ENCODE measurements at regions of chr19 and their contacts with region 1.

Region 1: DNA sequence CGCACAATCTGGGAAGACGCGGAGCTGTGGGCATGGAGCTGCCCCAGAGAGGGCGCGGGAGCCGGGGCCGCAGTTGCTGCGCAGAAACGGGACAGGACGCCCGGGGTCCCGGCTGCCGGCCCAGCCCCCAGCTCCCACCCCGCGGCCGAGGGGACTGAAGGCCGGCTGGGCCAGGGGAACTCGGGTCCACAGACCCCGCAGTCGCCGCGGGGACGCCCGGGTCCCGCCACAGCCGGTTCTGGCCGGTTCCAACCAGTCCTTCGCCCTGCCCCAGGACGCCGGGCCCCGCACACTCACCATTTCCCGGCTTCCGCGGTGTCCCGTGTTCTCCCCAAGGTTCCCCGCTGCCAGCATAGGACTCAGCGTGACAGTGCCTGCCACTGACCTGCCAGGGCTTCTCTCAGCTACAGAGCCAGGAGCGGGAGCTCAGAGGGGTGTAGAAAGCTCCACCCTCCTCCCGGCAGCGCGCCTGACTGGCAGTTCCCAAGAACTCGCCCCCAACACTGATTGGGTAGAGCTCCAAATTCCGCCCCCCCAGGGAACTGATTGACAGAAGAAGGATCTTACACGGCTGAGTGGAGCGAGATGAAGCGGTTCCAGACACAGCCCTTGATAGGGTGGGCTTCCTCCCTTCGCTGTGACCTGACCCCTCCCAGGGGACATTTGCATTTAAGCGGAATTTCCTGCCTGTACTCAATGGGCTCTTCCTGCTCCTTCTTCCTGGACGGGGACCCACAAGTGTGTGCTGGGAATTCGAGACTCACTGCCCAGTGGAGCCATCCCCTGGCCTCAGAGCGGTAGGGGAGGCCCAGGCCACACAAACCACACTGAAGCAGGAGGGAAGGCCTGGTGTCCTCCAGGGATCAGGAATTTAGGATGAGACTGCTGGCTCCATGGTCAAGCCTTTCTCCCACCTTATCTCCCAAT is at the start of gene ZNF442:
- DNase-seq: peak; percentile 93
- ATAC-seq: peak; percentile 98
- H3K4me3 ChIP-seq: peak within 1 kb of the TSS; percentile 70
- H3K27ac ChIP-seq: peak within 1 kb of the TSS; percentile 32
- H3K4me1 ChIP-seq: no peaks in the 10 kb centered on the region
- H3K27me3 ChIP-seq: no peaks in the 10 kb centered on the region
- CTCF ChIP-seq: peak; percentile 66
- POLR2A ChIP-seq: peak; percentile 79
- RAD21 ChIP-seq: peak; percentile 50
- total RNA-seq, gene ZNF442: 3.6 and 4.4 TPM in 2 replicates

Region 2: DNA sequence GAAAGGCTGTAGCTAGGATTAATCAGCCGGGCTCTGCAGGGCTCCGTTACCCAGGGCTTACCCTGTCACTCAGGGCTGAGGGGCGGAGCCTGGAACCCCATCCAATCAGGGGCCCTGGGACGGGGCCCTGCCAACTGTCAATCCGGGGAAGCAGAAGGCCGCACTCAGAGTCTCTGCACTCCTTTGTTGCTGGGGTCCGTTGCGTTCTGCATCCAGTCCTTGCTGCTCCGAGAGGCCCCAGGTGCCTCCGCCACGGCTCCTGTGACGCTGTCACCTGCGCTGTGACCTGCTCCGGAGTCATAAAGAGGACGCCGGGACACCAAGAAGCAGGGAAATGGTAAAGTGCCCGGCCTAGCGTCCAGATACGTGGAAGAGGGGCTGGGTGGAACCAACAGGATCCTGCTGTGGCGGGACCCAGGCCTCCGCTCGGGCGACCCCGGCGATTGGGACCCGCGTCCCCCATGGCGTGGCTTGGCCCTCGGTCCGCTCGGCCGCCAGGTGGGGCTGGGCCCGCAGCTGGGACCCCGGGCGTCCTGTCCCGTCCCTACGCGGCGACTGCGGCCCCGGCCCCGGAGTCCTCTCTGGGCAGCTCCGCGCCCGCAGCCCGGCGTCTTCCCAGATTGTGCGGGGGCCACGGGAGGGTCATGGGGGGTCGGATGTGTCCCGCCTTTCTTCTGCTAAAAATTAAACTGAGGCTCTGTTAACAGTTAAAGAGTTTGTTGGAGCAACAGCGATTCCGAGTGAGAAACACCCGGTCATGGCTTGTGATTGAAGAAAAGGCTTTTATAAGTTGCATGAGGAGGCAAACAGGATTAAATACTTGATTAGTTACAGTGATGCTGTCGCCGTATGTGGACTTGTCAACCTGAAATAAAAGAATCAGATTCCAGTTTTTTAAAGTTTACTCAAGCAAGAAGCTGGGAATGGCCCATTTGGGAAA is 566.8 kb before region 1 on chr19 and contains the start of gene ZNF491:
- CTCF ChIA-PET with region 1: no interaction called
- POLR2A ChIA-PET with region 1: no interaction called
- dilution Hi-C with region 1: no loop called
- in situ Hi-C with region 1: no loop called
- intact Hi-C with region 1: loop called (anchors 5 kb)
- DNase-seq: peak; percentile 87
- ATAC-seq: peak; percentile 99
- H3K4me3 ChIP-seq: peak within 1 kb of the TSS; percentile 76
- H3K27ac ChIP-seq: peak within 1 kb of the TSS; percentile 58
- H3K4me1 ChIP-seq: 0 out of 2 replicates have a peak, but pooled peaks cover 4% of the 10 kb centered on the region
- H3K27me3 ChIP-seq: no peaks in the 10 kb centered on the region
- CTCF ChIP-seq: peak; percentile 31
- POLR2A ChIP-seq: peak; percentile 52; the same call in 1 of the 2 replicates
- RAD21 ChIP-seq: no peak
- total RNA-seq, gene ZNF491: 3.6 and 4.2 TPM in 2 replicates

Region 3: DNA sequence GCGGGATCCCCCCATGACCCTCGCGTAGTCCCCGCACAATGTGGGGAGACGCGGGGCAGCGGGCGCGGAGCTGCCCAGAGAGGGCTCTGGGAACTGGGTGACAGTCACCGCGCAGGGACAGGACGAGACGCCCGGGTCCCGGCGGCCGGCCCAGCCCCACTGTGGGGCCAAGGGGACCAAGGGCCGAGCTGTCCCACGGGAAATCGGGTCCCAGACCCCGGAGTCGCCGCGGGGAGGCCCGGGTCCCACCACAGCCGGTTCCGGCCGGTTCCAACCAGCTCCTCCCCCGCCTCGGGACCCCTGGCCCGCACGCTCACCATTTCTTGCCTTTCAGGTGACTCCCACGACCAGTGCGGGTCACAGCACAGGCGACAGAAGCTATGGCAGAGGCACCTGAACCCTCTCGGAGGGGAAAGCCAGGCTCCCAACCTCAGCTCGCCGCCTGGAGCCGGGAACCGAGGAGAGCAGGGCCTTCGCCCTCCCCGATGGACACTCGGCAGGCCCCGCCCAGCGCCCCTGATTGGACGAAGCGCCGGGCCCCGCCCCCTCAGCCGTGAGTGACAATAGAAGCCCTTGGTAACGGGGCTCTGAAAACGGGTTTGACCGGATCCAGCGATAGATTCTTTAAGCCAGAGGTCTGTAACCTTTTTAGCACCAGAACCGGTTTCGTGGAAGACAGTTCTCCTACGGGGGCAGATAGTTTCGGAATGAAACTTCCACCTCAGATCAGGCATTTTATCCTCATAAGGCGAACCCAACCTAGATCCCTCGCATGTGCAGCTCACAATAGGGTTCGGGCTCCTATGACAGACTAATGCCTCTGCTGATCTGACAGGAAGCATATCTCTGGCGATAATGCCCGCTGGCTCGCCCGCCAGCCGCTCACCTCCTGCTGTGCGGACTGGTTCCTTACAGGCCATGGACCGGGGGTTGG is 330.0 kb before region 1 on chr19 and contains the start of gene ZNF433:
- CTCF ChIA-PET with region 1: no interaction called
- POLR2A ChIA-PET with region 1: interaction called, 20 read pairs
- dilution Hi-C with region 1: no loop called
- in situ Hi-C with region 1: no loop called
- intact Hi-C with region 1: no loop called
- DNase-seq: peak; percentile 71
- ATAC-seq: peak; percentile 100
- H3K4me3 ChIP-seq: peak within 1 kb of the TSS; percentile 90
- H3K27ac ChIP-seq: peak within 1 kb of the TSS; percentile 97
- H3K4me1 ChIP-seq: no peaks in the 10 kb centered on the region
- H3K27me3 ChIP-seq: no peaks in the 10 kb centered on the region
- CTCF ChIP-seq: no peak
- POLR2A ChIP-seq: peak; percentile 78
- RAD21 ChIP-seq: no peak
- total RNA-seq, gene ZNF433: 6.4 and 11.1 TPM in 2 replicates

Region 4: DNA sequence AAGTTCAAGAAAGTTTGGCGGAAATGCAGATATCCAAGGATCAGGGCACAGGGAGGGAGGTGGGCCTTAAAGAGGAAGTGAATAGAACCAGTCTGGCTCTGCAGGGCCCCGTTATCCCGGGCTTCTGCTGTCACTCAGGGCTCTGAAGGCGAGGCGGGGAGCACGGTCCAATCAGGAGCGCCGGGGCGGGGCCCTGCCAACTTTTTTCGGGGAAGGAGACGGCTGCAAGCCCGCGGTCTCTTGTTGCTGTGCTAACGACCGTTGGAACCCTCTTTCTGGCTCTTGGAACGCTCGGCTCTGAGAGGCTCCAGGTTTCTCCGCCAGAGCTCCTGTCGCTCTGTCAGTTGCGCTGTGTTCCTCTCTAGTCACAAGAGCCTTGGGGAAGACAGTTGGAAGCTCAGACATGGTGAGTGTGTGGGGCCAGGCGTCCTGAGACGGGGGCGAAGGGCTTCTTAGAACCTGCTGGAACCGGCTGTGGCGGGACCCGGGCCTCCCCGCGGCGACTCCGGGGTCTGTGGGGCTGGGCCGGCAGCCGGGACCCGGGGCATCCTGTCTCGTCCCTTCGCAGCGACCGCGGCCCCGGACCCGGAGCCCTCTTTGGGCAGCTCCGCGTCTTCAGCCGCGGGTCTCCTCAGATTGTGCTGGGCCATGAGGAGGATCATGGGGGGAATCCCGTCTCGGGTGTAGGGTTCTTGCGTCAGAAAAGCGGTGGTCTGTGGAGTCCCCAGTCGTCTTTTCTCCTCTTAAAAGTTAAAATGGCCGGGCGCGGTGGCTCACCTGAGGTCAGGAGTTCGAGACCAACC is 273.2 kb before region 1 on chr19:
- CTCF ChIA-PET with region 1: interaction called, 3 read pairs
- POLR2A ChIA-PET with region 1: no interaction called
- dilution Hi-C with region 1: no loop called
- in situ Hi-C with region 1: no loop called
- intact Hi-C with region 1: loop called (anchors 5 kb)
- DNase-seq: peak; percentile 86
- ATAC-seq: peak; percentile 99
- H3K4me3 ChIP-seq: peak overlapping the region; percentile 91
- H3K27ac ChIP-seq: peak overlapping the region; percentile 82
- H3K4me1 ChIP-seq: 0 out of 2 replicates have a peak, but pooled peaks cover 2% of the 10 kb centered on the region
- H3K27me3 ChIP-seq: no peaks in the 10 kb centered on the region
- CTCF ChIP-seq: no peak
- POLR2A ChIP-seq: no peak
- RAD21 ChIP-seq: no peak

Region 5: DNA sequence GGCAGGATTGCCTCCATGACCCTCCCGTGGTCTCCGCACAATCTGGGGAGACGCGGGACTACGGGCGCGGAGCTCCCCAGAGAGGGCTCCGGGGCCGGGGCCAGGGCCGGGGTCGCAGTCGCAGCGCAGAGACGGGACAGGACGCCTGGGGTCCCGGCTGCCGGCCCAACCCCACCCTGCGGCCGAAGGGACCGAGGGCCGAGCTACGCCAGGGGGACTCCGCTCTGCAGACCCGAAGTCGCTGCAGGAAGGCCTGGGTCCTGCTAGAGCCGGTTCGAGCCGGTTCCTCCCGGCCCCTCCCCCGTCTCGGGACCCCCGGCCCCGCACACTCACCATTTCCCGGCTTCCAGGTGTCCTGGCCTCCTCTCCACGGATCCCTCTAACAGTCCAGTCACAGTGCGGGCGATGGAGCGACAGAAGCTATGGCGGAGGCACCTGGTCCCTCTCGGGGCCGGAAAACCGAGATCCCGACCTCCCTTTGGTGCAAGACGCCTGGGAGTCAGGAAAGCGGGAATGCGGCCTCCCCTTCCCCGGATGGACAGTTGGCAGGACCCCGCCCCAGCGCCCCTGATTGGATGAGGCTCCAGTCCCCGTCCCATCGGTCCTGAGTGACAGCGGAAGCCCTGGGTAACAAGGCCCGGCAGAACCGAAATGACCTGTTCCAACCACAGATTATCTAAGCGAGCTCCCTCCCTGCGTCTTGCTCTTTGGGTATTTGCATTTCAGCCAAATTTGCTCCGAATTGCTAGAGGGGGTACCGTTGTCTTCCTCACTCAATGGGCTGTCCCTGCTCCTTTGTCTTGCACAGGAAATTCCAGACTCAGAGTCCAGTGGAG is 209.1 kb before region 1 on chr19 and contains the start of gene ZNF625:
- CTCF ChIA-PET with region 1: no interaction called
- POLR2A ChIA-PET with region 1: no interaction called
- dilution Hi-C with region 1: no loop called
- in situ Hi-C with region 1: no loop called
- intact Hi-C with region 1: loop called (anchors 5 kb)
- DNase-seq: peak; percentile 87
- ATAC-seq: peak; percentile 99
- H3K4me3 ChIP-seq: peak within 1 kb of the TSS; percentile 62
- H3K27ac ChIP-seq: peak within 1 kb of the TSS; percentile 77
- H3K4me1 ChIP-seq: peaks cover 3% of the 10 kb centered on the region
- H3K27me3 ChIP-seq: no peaks in the 10 kb centered on the region
- CTCF ChIP-seq: no peak
- POLR2A ChIP-seq: peak; percentile 52; the same call in 1 of the 2 replicates
- RAD21 ChIP-seq: no peak
- total RNA-seq, gene ZNF625: 14.4 and 16.7 TPM in 2 replicates

Region 6: GRCh38 chr19:12353375-12353774 is 12.1 kb before region 1 on chr19:
- CTCF ChIA-PET with region 1: interaction called, 10 read pairs
- POLR2A ChIA-PET with region 1: no interaction called
- dilution Hi-C with region 1: no loop called
- in situ Hi-C with region 1: no loop called
- intact Hi-C with region 1: no loop called
- DNase-seq: no peak
- ATAC-seq: no peak
- H3K4me3 ChIP-seq: no peak overlapping the region
- H3K27ac ChIP-seq: no peak overlapping the region
- H3K4me1 ChIP-seq: no peaks in the 10 kb centered on the region
- H3K27me3 ChIP-seq: no peaks in the 10 kb centered on the region
- CTCF ChIP-seq: no peak
- POLR2A ChIP-seq: no peak
- RAD21 ChIP-seq: no peak

Region 7: GRCh38 chr19:14073261-14073924 is 1707.9 kb after region 1 on chr19:
- CTCF ChIA-PET with region 1: no interaction called
- POLR2A ChIA-PET with region 1: interaction called, 10 read pairs
- dilution Hi-C with region 1: no loop called
- in situ Hi-C with region 1: no loop called
- intact Hi-C with region 1: no loop called
- DNase-seq: peak; percentile 82
- ATAC-seq: peak; percentile 79
- H3K4me3 ChIP-seq: peak overlapping the region; percentile 61
- H3K27ac ChIP-seq: peak overlapping the region; percentile 13; the same call in 1 of the 2 replicates
- H3K4me1 ChIP-seq: peaks cover 10% of the 10 kb centered on the region
- H3K27me3 ChIP-seq: peaks cover 2% of the 10 kb centered on the region; the same call in 1 of the 2 replicates
- CTCF ChIP-seq: peak; percentile 66
- POLR2A ChIP-seq: no peak
- RAD21 ChIP-seq: peak; percentile 29